CD4-positive, alpha-beta memory T cell (primary cell): ENCODE measurements at regions of chr19 and their contacts with region 1.

Region 1: DNA sequence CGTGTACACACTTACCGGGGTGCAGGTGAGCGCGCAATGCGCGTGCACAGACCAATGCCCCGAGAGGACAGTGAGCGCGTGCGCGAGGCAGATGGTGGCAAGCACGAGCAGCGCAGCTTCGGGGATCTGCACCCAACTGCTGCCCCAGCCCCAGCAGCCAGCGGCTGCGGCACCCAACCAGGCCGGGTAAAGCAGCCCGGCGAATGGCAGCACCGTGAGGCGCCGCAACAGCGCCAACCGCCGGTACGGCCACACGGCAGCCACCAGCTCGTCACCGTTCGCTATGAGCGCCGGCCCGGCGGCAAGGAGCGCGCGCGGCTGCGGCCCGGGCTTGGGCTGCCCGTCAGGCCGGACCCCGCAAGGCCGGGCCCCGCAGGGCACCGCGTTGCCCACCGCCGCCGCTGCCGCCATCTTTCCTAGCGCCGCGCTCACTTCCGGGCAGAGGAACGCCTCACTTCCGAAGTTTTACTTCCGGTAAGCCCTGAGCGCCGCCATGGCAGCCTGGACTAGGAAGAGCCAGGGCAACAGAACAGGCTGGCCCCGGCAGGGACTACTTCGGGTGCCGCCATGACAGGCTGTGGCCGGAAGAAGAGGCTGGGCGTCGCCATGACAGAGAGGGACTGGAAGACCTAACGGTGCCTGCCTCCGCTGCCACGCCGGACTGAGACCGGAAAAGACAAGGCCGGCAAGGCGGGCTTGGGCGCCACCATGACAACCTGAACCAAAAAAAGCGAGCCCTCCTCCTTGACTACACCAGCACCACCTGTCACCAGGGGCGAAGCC is at the start of gene ATP13A1:
- DNase-seq: peak; percentile 95 to 98 (median 96)
- H3K4me3 ChIP-seq: peak within 1 kb of the TSS; percentile 78 to 89
- H3K4me3 Mint-ChIP-seq: peak within 1 kb of the TSS; percentile 92 to 96 (median 93)
- H3K27ac ChIP-seq: peak within 1 kb of the TSS; percentile 89
- H3K27ac Mint-ChIP-seq: peak within 1 kb of the TSS; percentile 95 to 99 (median 98)
- H3K4me1 ChIP-seq: peaks cover 58% of the 10 kb centered on the region
- H3K4me1 Mint-ChIP-seq: peaks cover 24 to 51% (median 38%) of the 10 kb centered on the region in 4 donors
- H3K27me3 ChIP-seq: no peaks in the 10 kb centered on the region
- H3K27me3 Mint-ChIP-seq: no peaks in the 10 kb centered on the region
- total RNA-seq, gene ATP13A1: 137 to 139 TPM

Region 2: DNA sequence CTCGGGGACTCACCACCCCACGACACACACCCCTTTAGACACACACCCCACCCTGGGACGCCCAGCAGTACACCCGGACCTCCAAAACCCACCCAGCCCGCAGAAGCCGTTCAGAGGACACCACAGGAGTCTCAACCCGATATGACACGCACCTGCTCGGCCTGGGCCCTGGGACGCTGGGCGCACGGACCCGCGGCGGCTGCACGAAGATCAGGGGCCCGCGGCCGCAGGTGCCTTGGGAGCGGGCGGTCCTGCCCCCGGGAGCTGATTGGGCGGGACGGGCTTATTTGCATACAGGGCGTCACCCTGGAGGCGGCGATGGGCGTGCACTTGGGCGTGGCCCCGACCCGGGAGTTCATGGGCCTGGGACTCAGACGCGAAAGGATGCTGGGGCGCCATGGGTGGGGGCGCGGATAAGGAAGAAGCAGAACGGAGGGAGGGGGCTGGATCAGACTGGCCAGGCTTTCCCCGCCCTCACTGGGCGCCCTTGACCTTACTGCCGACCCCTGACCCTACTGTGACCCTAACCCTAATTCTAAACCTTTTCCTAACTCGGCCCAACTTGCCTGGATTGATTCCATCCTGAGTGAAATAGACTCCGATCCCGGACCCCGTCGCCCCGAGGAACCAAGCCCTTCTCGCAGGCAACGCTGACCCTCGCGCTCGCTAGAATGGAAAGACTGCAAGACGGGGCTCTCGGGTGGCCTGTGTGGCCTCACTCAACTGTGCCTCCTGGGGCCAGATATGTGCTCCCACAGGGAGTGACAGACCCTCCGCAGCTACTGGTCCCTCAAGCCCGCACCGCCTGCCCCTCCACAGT is 493.2 kb before region 1 on chr19 and contains the start of gene MEF2B:
- CTCF ChIA-PET with region 1: no interaction called
- POLR2A ChIA-PET with region 1: no interaction called
- intact Hi-C with region 1: no loop called
- DNase-seq: peak; percentile 68 to 85 (median 73)
- H3K4me3 ChIP-seq: peak within 1 kb of the TSS in 1 of 2 donors; percentile 5
- H3K4me3 Mint-ChIP-seq: peak within 1 kb of the TSS in 7 of 8 donors; percentile 60 to 82 (median 71)
- H3K27ac ChIP-seq: no peak within 1 kb of the TSS
- H3K27ac Mint-ChIP-seq: peak within 1 kb of the TSS in 6 of 7 donors; percentile 25 to 79 (median 60)
- H3K4me1 ChIP-seq: peaks cover 14% of the 10 kb centered on the region
- H3K4me1 Mint-ChIP-seq: peaks cover 12 to 17% (median 14%) of the 10 kb centered on the region in 4 donors
- H3K27me3 ChIP-seq: no peaks in the 10 kb centered on the region
- H3K27me3 Mint-ChIP-seq: peaks cover 1% of the 10 kb centered on the region in 2 donors
- total RNA-seq, gene MEF2B: 3.1 to 5.2 TPM

Region 3: GRCh38 chr19:19404879-19405860 is 258.3 kb before region 1 on chr19 and contains the start of gene GATAD2A:
- CTCF ChIA-PET with region 1: no interaction called
- POLR2A ChIA-PET with region 1: interaction called, 6 read pairs
- intact Hi-C with region 1: loop called (anchors 10 kb)
- DNase-seq: peak; percentile 86 to 94 (median 90)
- H3K4me3 ChIP-seq: peak within 1 kb of the TSS; percentile 21 to 78
- H3K4me3 Mint-ChIP-seq: peak within 1 kb of the TSS; percentile 86 to 97 (median 95)
- H3K27ac ChIP-seq: peak within 1 kb of the TSS; percentile 71
- H3K27ac Mint-ChIP-seq: peak within 1 kb of the TSS; percentile 92 to 96 (median 95)
- H3K4me1 ChIP-seq: peaks cover 53% of the 10 kb centered on the region
- H3K4me1 Mint-ChIP-seq: peaks cover 36 to 72% (median 55%) of the 10 kb centered on the region in 4 donors
- H3K27me3 ChIP-seq: no peaks in the 10 kb centered on the region
- H3K27me3 Mint-ChIP-seq: no peaks in the 10 kb centered on the region
- total RNA-seq, gene GATAD2A: 101 to 108 TPM

Region 4: DNA sequence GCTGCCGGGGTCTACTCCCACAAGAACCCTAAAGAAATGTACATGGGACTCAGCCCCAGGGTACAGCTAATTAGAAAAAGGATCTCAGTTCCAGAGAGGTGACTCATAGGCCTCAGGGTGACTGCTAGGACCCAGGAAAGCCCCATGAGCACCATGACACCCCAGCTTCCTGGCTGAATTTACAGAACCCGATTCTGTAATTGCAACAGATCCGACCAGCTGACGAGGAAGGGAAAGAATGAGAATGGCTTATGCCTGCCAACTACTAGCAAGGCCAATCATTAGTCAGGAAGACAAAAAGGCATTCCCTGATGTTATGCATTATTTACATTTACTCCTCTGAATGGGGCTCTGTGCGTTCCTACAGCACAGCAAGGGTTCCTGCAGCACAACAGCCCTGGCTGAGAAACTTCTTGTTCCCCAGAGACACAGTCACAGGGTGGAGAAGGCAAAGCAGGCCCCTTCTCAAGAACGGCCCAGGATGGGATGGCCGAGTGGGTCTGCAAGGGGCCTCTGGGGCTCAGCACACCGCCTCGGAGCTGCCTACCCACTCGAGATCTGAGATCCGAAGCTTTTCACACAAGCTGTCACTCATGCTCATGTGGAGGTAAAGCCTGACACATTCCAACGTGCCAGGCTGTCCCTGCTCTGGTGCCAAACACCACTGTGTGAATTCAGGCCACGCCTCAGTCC is 72.2 kb before region 1 on chr19:
- CTCF ChIA-PET with region 1: no interaction called
- POLR2A ChIA-PET with region 1: interaction called, 41 read pairs
- intact Hi-C with region 1: no loop called
- DNase-seq: peak; percentile 63 to 96 (median 69)
- H3K4me3 ChIP-seq: no peak overlapping the region
- H3K4me3 Mint-ChIP-seq: peak overlapping the region in 7 of 8 donors; percentile 28 to 88 (median 62)
- H3K27ac ChIP-seq: peak overlapping the region; percentile 90
- H3K27ac Mint-ChIP-seq: peak overlapping the region; percentile 92 to 98 (median 96)
- H3K4me1 ChIP-seq: peaks cover 71% of the 10 kb centered on the region
- H3K4me1 Mint-ChIP-seq: peaks cover 30 to 74% (median 52%) of the 10 kb centered on the region in 4 donors
- H3K27me3 ChIP-seq: no peaks in the 10 kb centered on the region
- H3K27me3 Mint-ChIP-seq: no peaks in the 10 kb centered on the region

Region 5: DNA sequence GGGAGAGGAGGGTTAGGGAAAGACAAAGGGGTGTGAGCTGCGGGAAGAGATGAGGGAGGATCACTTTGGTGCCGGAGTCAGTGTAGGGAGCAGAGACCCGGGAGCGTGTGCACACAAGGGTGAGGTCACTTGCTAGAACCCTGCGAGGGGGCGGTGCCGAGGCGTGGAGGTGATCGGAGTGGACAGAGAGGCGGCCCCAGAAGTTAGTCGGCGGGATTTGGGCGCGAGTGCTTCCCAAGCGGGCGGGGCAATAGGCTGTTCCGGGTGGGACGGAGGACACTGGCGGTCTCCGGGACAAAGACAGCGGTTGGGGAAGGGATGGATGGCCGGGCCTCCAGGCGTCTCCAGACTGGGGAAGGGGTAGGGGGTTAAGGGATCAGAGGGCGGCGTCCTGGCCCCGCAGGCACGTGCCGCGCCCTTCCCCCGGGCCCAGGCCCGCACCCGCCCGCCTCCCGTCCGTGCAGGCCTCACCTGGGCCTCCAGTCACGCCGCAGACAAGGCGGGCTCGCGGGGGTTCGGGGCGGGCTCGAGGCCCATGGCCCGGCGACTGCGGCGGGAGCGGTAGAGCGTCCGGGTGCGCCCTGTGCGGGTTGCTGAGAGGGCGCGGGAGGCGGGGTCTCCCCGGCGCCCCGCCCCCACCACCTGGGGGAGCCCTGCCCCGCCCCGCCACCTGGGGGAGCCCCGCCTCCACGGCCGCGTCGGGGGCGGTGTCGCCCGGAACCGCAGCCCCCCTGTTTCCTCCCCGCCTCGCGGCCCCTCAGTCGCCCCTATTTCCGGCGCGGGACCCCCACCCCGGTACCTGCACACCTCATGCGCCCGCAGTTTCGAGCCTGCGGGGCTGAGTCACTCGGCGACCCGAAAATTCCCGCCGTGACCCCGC is 35.6 kb before region 1 on chr19 and contains the start of gene LPAR2:
- CTCF ChIA-PET with region 1: interaction called, 5 read pairs
- POLR2A ChIA-PET with region 1: interaction called, 42 read pairs
- intact Hi-C with region 1: loop called (anchors 1 kb)
- DNase-seq: peak; percentile 80 to 87 (median 84)
- H3K4me3 ChIP-seq: peak within 1 kb of the TSS; percentile 68 to 73
- H3K4me3 Mint-ChIP-seq: peak within 1 kb of the TSS; percentile 92 to 99 (median 93)
- H3K27ac ChIP-seq: peak within 1 kb of the TSS; percentile 80
- H3K27ac Mint-ChIP-seq: peak within 1 kb of the TSS; percentile 92 to 98 (median 95)
- H3K4me1 ChIP-seq: peaks cover 22% of the 10 kb centered on the region
- H3K4me1 Mint-ChIP-seq: peaks cover 14 to 36% (median 28%) of the 10 kb centered on the region in 4 donors
- H3K27me3 ChIP-seq: no peaks in the 10 kb centered on the region
- H3K27me3 Mint-ChIP-seq: no peaks in the 10 kb centered on the region
- total RNA-seq, gene LPAR2: 70.7 to 72.4 TPM

Region 6: GRCh38 chr19:19711934-19712828 is 48.7 kb after region 1 on chr19:
- CTCF ChIA-PET with region 1: no interaction called
- POLR2A ChIA-PET with region 1: interaction called, 21 read pairs
- intact Hi-C with region 1: no loop called
- DNase-seq: no peak
- H3K4me3 ChIP-seq: no peak overlapping the region
- H3K4me3 Mint-ChIP-seq: no peak overlapping the region
- H3K27ac ChIP-seq: no peak overlapping the region
- H3K27ac Mint-ChIP-seq: no peak overlapping the region
- H3K4me1 ChIP-seq: no peaks in the 10 kb centered on the region
- H3K4me1 Mint-ChIP-seq: peaks cover 0 to 2% (median under 1%) of the 10 kb centered on the region in 4 donors
- H3K27me3 ChIP-seq: no peaks in the 10 kb centered on the region
- H3K27me3 Mint-ChIP-seq: no peaks in the 10 kb centered on the region

Region 7: GRCh38 chr19:19821366-19821951 is 158.0 kb after region 1 on chr19 and contains the start of gene ZNF506:
- CTCF ChIA-PET with region 1: interaction called, 3 read pairs
- POLR2A ChIA-PET with region 1: interaction called, 135 read pairs
- intact Hi-C with region 1: loop called (anchors 2 kb)
- DNase-seq: peak; percentile 96 to 98 (median 97)
- H3K4me3 ChIP-seq: peak within 1 kb of the TSS; percentile 69 to 84
- H3K4me3 Mint-ChIP-seq: peak within 1 kb of the TSS; percentile 98 to 100 (median 100)
- H3K27ac ChIP-seq: peak within 1 kb of the TSS; percentile 97
- H3K27ac Mint-ChIP-seq: peak within 1 kb of the TSS; percentile 100
- H3K4me1 ChIP-seq: peaks cover 41% of the 10 kb centered on the region
- H3K4me1 Mint-ChIP-seq: peaks cover 14 to 50% (median 32%) of the 10 kb centered on the region in 4 donors
- H3K27me3 ChIP-seq: no peaks in the 10 kb centered on the region
- H3K27me3 Mint-ChIP-seq: no peaks in the 10 kb centered on the region
- total RNA-seq, gene ZNF506: 76.4 to 80.5 TPM

Region 8: DNA sequence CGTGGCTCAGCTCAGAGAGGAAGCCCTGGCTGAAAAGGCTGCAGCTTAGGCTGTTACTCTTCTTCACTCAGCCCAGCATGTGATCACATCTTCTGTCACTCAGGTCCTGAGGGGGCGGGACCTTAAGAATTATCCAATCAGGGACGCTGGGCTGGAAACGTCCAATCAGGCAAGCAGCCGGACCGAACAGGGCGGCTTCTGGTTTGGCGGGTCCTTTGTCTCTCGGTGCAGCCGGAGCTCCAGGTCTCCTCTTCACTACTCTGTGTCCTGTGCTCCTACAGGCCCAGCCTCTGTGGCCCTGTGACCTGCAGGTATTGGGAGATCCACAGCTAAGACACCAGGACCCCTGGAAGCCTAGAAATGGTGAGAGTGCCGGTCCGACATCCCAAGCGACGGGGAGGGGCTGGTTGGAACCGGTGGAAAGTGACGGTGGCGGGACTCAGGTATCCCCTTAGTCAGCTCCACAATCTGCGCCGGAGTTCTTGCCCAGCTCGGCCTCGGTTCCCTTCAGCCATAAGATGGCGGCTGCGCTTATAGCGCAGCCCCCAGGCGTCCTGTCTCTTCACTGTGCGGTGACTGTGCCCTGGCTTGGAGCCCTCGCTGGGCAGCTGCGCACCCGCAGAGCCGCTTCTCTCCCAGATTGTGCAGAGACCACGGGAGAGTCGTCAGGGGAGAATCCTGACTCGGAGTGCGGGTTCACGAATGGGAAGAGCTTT is 237.4 kb after region 1 on chr19 and contains the start of gene ZNF93:
- CTCF ChIA-PET with region 1: no interaction called
- POLR2A ChIA-PET with region 1: interaction called, 33 read pairs
- intact Hi-C with region 1: loop called (anchors 1 kb)
- DNase-seq: peak; percentile 90 to 96 (median 92)
- H3K4me3 ChIP-seq: peak within 1 kb of the TSS; percentile 79 to 82
- H3K4me3 Mint-ChIP-seq: peak within 1 kb of the TSS; percentile 96 to 99 (median 98)
- H3K27ac ChIP-seq: peak within 1 kb of the TSS; percentile 66
- H3K27ac Mint-ChIP-seq: peak within 1 kb of the TSS; percentile 80 to 97 (median 93)
- H3K4me1 ChIP-seq: peaks cover 15% of the 10 kb centered on the region
- H3K4me1 Mint-ChIP-seq: peaks cover 12 to 34% (median 24%) of the 10 kb centered on the region in 4 donors
- H3K27me3 ChIP-seq: no peaks in the 10 kb centered on the region
- H3K27me3 Mint-ChIP-seq: no peaks in the 10 kb centered on the region
- total RNA-seq, gene ZNF93: 8.8 to 9.2 TPM